ENCODE measurements at regions of chr18 and their contacts with region 1.

Region 1: GRCh38 chr18:3665780-3666525 is 216.0 kb downstream of the TGIF1 start:
- DNase-seq: peak; percentile 76
- ATAC-seq: peak; percentile 87
- H3K4me3 Mint-ChIP-seq: no peak overlapping the region
- H3K27ac Mint-ChIP-seq: no peak overlapping the region
- H3K4me1 Mint-ChIP-seq: peaks cover 20% of the 10 kb centered on the region
- H3K27me3 Mint-ChIP-seq: no peaks in the 10 kb centered on the region
- CTCF ChIP-seq: peak; percentile 99

Region 2: GRCh38 chr18:3261371-3262246 is 404.3 kb before region 1 on chr18 and contains the start of gene MYL12B:
- CTCF ChIA-PET with region 1: interaction called, 16 read pairs
- POLR2A ChIA-PET with region 1: no interaction called
- intact Hi-C with region 1: no loop called
- DNase-seq: peak; percentile 85
- ATAC-seq: peak; percentile 81
- H3K4me3 Mint-ChIP-seq: peak within 1 kb of the TSS; percentile 91
- H3K27ac Mint-ChIP-seq: peak within 1 kb of the TSS; percentile 99
- H3K4me1 Mint-ChIP-seq: peaks cover 59% of the 10 kb centered on the region
- H3K27me3 Mint-ChIP-seq: no peaks in the 10 kb centered on the region
- CTCF ChIP-seq: no peak
- total RNA-seq, gene MYL12B: 243 to 264 TPM

Region 3: DNA sequence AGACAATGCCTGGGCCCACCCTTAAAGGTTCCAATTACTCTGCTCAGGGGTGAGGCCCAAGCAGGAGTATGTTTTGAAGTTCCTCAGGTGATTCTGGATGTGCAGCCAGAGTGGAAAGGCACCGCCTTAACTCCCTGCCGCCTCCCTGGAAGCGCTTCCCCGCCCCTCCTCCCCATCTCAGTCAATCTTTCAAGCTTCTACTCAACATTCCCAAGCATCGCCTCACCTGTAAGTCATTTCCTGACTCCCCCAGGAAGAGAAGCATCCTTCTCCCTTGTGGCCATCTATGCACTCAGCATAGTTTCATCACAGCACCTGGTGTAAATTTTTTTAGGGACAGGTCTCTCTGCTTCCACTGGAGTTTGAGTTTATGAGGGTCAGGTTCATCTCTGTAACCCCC is 336.5 kb before region 1 on chr18:
- CTCF ChIA-PET with region 1: interaction called, 18 read pairs
- POLR2A ChIA-PET with region 1: no interaction called
- intact Hi-C with region 1: no loop called
- DNase-seq: no peak
- ATAC-seq: no peak
- H3K4me3 Mint-ChIP-seq: no peak overlapping the region
- H3K27ac Mint-ChIP-seq: no peak overlapping the region
- H3K4me1 Mint-ChIP-seq: no peaks in the 10 kb centered on the region
- H3K27me3 Mint-ChIP-seq: peaks cover 1% of the 10 kb centered on the region
- CTCF ChIP-seq: no peak

Region 4: GRCh38 chr18:3454365-3455089 is 211.4 kb before region 1 on chr18:
- CTCF ChIA-PET with region 1: interaction called, 60 read pairs
- POLR2A ChIA-PET with region 1: interaction called, 4 read pairs
- intact Hi-C with region 1: loop called (anchors 5 kb)
- DNase-seq: peak; percentile 39
- ATAC-seq: no peak
- H3K4me3 Mint-ChIP-seq: peak overlapping the region; percentile 94
- H3K27ac Mint-ChIP-seq: peak overlapping the region; percentile 99
- H3K4me1 Mint-ChIP-seq: peaks cover 61% of the 10 kb centered on the region
- H3K27me3 Mint-ChIP-seq: no peaks in the 10 kb centered on the region
- CTCF ChIP-seq: peak; percentile 83

Region 5: GRCh38 chr18:3599195-3599594 is 66.8 kb before region 1 on chr18:
- CTCF ChIA-PET with region 1: interaction called, 91 read pairs
- POLR2A ChIA-PET with region 1: interaction called, 7 read pairs
- intact Hi-C with region 1: loop called (anchors 5 kb)
- DNase-seq: no peak
- ATAC-seq: no peak
- H3K4me3 Mint-ChIP-seq: no peak overlapping the region
- H3K27ac Mint-ChIP-seq: no peak overlapping the region
- H3K4me1 Mint-ChIP-seq: peaks cover 42% of the 10 kb centered on the region
- H3K27me3 Mint-ChIP-seq: no peaks in the 10 kb centered on the region
- CTCF ChIP-seq: no peak

Region 6: DNA sequence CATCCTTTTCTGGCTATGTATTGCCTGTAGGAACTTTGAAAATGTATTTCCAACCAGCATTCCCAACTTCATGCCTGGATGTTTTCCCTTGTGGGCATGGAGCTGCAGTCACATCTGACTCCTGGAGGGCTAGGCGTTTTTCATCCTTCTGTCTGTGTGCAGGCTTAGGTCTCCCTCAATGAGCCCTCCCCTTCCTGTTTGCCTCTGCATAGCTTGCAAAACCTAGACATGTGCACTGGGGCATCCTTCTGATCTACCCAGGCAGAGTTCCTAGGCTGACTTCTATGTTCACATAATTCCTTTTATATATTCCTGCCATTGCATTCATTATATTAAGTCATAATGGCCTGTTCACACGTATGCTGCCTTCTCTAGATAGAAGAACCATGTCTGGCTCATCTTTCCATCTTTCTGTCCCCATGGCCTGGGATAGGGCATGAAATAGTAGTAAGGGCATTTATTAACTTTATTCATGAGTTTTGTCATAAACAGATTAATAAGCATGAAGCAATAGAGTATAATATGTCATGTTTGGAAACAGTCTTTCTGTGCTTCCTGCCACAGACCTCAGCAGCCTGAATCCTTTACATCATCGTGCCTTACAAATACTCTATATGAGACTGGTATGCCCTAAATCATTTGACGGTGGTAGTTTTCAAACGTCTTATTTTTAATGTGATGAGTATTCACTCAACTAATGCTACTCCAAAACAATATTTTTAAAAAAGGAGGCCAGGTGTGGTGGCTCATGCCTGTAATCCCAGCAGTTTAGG is 20.4 kb before region 1 on chr18:
- CTCF ChIA-PET with region 1: interaction called, 13 read pairs
- POLR2A ChIA-PET with region 1: interaction called, 3 read pairs
- intact Hi-C with region 1: no loop called
- DNase-seq: no peak
- ATAC-seq: no peak
- H3K4me3 Mint-ChIP-seq: no peak overlapping the region
- H3K27ac Mint-ChIP-seq: no peak overlapping the region
- H3K4me1 Mint-ChIP-seq: peaks cover 16% of the 10 kb centered on the region
- H3K27me3 Mint-ChIP-seq: no peaks in the 10 kb centered on the region
- CTCF ChIP-seq: no peak